Lower leg skin (tissue), 4 donors: ENCODE measurements at regions of chr16 and their contacts with region 1.

Region 1: GRCh38 chr16:68229431-68230198 is 6.3 kb downstream of the ESRP2 start:
- DNase-seq: peak in 1 of 2 donors; percentile 85
- H3K4me3 ChIP-seq: no peak overlapping the region
- CTCF ChIP-seq: peak in 1 of 3 donors; percentile 67
- POLR2A ChIP-seq: no peak

Region 2: DNA sequence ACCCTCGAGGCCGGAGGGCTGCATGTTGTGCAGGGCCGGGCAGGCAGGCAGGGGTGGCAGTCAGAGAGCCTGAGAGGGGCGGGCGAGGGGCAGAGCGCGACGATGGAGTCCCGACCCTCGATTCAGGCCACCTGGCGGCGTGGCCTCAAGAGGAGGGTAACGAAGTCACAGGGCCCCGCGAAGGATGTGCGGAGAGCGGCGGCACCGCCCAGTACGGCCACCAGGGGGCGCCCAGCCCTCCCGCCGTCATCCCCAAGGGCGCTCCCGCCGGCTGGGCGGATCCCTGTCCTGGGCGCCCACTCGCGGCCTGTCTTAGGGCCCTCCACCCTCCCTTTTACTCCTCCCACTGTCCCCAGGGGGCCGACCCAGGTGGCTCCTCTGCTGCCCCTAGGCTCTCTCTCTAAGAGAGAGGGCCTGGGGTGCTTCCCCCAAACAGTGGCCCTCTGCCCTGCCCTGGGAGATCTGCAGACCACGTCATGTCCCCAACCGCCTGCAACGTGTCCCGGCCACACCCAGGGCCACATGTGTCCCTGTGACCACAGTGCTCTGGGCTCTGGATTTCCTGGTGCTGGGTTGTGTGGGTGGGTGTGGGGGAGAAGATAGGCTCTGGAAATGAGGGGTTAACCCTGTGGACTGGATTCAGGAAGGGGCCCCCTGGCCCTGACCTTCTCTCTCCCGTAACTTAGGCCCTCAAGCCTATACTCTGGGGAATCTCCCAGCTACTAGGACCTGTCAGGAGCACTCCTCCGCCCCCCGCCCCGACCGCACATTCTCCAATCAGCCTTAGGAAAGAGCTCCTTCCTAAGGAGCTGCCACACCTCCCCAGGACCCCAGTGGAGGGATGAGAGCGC is 236.2 kb before region 1 on chr16:
- intact Hi-C with region 1: loop called (anchors 10 kb)
- DNase-seq: peak; percentile 54 to 94
- H3K4me3 ChIP-seq: no peak overlapping the region
- CTCF ChIP-seq: peak in 2 of 3 donors; percentile 94 to 99
- POLR2A ChIP-seq: no peak